Activated CD8-positive, alpha-beta T cell treated with anti-CD3 and anti-CD28 coated beads for 36 hours (primary cell): ENCODE measurements at regions of chr2 and their contacts with region 1.

Region 1: GRCh38 chr2:152861349-152861942 is 143.0 kb downstream of the ARL6IP6 start:
- DNase-seq: peak; percentile 41
- ATAC-seq: no peak
- H3K4me3 Mint-ChIP-seq: no peak overlapping the region
- H3K27ac Mint-ChIP-seq: no peak overlapping the region
- H3K4me1 Mint-ChIP-seq: no peaks in the 10 kb centered on the region
- H3K27me3 Mint-ChIP-seq: peaks cover 2% of the 10 kb centered on the region
- CTCF ChIP-seq: peak; percentile 64

Region 2: DNA sequence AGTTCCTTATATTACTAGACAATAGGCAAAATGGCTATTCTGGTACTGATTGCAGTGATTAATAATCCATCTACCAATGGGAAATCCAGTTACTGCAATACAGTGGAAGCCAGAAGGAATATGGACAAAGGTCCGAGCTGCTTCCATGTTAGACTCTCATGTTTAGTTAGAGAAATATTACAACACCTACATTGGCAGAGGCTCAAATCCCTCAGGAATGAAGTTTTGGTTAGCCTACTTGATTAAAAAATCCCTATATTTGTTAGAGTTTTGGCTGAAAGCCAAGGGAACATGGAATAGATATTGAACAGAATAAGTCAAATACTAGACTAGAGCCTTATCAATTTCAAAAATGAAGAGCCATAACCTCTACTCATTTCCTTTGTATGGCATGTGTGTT is 94.5 kb before region 1 on chr2:
- CTCF ChIA-PET with region 1: no interaction called
- POLR2A ChIA-PET with region 1: no interaction called
- intact Hi-C with region 1: no loop called
- DNase-seq: no peak
- ATAC-seq: no peak
- H3K4me3 Mint-ChIP-seq: no peak overlapping the region
- H3K27ac Mint-ChIP-seq: no peak overlapping the region
- H3K4me1 Mint-ChIP-seq: no peaks in the 10 kb centered on the region
- H3K27me3 Mint-ChIP-seq: peaks cover 3% of the 10 kb centered on the region
- CTCF ChIP-seq: no peak

Region 3: DNA sequence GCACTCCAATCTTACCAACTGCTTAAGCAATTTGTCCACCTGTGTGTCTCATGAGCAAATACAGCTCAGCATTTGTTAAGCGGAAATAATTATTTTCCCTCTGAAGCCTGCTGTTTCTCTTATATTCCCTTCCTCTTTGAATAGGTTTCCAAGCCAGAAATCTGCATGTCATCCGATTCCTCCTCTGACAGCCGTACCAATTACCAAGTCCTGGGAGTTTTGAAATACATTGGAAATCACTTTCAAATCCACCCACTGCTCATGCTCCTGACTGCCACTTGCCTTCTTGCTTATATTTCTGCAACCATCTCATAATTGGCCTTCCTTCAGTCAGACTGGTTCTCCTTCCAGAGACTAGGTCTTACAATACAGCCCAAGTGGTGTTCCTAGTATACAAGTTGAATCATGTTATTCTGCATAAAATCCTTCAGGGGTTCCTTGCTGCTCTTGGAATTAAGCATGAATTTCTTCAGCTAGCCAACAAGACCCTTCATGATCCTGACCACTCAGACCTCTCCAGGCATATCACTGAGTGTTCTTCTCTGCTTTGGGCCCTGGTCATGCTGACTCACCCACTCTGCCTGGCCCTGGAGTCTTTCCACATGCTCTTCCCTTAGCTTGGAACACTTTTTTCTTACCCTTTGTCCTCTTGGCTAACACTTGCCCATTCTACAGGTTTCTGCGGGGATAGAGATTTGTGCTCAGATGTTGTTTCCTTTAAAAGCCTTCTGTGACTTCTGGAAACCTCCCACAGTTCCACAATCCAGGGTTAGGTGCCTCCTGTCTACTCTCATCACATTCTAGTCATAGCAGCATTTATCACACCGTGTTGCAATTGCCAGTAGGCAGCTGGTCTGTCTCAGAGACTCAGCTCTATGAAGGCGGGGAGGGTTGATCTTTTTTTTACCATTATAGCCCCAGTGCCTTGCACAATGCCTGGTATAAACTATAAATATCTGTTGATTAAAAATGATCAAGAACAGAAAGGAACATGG is 14.6 kb after region 1 on chr2:
- CTCF ChIA-PET with region 1: interaction called, 10 read pairs
- POLR2A ChIA-PET with region 1: no interaction called
- intact Hi-C with region 1: no loop called
- DNase-seq: no peak
- ATAC-seq: no peak
- H3K4me3 Mint-ChIP-seq: no peak overlapping the region
- H3K27ac Mint-ChIP-seq: no peak overlapping the region
- H3K4me1 Mint-ChIP-seq: no peaks in the 10 kb centered on the region
- H3K27me3 Mint-ChIP-seq: no peaks in the 10 kb centered on the region
- CTCF ChIP-seq: no peak

Region 4: DNA sequence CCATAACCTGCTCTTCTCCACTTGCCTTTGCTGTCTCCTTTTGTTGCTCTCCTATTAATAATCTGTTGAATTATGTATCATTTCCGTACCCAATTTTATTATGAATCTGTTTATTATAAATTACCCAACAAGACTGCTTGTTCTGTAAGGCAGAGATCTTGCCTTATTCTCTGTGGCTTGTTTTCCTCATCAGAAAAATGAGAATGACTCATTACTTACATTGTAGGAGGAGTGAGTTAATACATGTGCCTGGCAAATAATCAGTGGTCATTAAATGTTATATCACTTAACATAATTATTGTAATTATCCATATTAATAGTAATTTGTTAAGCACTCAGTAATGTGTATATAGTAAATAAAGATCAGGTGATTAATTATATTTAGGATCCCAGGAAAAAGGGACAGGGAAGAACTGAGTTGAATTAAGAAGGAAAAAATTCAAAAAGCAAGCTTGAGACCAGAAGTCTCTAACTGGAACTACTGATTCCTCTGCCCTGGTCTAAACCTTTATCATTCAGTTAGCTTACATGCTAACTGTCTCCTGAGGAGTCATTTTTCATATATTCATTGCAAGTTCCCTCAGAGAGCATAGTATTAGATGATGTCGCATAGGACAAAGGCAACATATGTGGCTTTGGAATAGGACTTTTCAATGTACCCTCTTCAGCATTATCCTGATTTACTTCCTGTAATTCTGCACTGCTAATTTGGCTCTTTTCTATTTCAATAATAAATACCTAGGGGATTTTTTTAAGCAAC is 1346.0 kb after region 1 on chr2:
- CTCF ChIA-PET with region 1: no interaction called
- POLR2A ChIA-PET with region 1: no interaction called
- intact Hi-C with region 1: no loop called
- DNase-seq: no peak
- ATAC-seq: no peak
- H3K4me3 Mint-ChIP-seq: no peak overlapping the region
- H3K27ac Mint-ChIP-seq: no peak overlapping the region
- H3K4me1 Mint-ChIP-seq: no peaks in the 10 kb centered on the region
- H3K27me3 Mint-ChIP-seq: no peaks in the 10 kb centered on the region
- CTCF ChIP-seq: no peak